ENCODE measurements at regions of chr10 and their contacts with region 1.

Region 1: DNA sequence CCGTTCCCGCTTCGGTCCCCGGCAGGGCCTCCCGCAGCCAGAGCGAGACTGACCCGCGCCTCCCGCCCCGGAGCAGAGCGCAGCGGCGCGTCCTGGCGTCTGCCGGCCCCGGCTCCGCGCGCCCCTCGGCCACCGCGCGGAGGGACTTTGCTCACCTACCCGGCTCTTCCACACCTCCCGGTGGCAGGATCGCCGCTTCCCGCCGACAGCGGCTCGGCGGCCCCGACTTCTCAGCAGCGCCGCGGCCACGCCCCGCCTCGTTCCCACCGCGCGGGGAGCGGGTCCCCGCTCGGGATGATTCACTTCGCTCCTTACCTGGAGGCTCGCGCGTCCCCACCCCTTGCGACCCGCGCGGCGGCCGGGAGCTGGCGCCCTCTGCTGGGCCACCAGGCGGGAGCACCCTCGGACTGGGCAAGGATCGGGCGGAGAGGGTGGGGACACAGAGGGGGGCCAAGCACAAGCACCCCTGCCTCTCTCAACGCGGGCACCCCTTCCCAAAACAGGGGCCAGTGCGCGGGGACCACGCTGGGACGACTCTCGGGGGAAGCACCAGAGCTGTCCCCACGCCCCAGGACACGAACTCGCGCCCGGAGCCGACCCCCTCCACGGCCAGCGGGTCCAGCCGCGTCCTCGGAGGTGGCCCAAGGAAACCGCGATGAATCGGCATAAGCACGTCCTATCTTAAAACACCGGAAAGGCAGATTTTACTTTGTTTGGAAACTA is 101.0 kb upstream of the SVIL start:
- DNase-seq: peak; percentile 86 to 95
- ATAC-seq: peak; percentile 83 to 90 (median 86)
- H3K4me3 ChIP-seq: peak overlapping the region; percentile 94
- H3K27ac ChIP-seq: peak overlapping the region; percentile 98
- H3K4me1 ChIP-seq: peaks cover 33% of the 10 kb centered on the region
- H3K27me3 ChIP-seq: no peaks in the 10 kb centered on the region
- CTCF ChIP-seq: peak; percentile 87

Region 2: GRCh38 chr10:29555746-29556481 is 179.8 kb before region 1 on chr10:
- intact Hi-C with region 1: no loop called
- DNase-seq: no peak
- ATAC-seq: no peak
- H3K4me3 ChIP-seq: no peak overlapping the region
- H3K27ac ChIP-seq: peak overlapping the region; percentile 81
- H3K4me1 ChIP-seq: peaks cover 67% of the 10 kb centered on the region
- H3K27me3 ChIP-seq: no peaks in the 10 kb centered on the region
- CTCF ChIP-seq: no peak

Region 3: GRCh38 chr10:29646238-29646902 is 89.4 kb before region 1 on chr10:
- intact Hi-C with region 1: loop called (anchors 5 kb)
- DNase-seq: peak in 1 of 2 donors; percentile 51
- ATAC-seq: peak; percentile 45 to 54 (median 49)
- H3K4me3 ChIP-seq: peak overlapping the region; percentile 25
- H3K27ac ChIP-seq: peak overlapping the region; percentile 94
- H3K4me1 ChIP-seq: peaks cover 67% of the 10 kb centered on the region
- H3K27me3 ChIP-seq: no peaks in the 10 kb centered on the region
- CTCF ChIP-seq: no peak

Region 4: DNA sequence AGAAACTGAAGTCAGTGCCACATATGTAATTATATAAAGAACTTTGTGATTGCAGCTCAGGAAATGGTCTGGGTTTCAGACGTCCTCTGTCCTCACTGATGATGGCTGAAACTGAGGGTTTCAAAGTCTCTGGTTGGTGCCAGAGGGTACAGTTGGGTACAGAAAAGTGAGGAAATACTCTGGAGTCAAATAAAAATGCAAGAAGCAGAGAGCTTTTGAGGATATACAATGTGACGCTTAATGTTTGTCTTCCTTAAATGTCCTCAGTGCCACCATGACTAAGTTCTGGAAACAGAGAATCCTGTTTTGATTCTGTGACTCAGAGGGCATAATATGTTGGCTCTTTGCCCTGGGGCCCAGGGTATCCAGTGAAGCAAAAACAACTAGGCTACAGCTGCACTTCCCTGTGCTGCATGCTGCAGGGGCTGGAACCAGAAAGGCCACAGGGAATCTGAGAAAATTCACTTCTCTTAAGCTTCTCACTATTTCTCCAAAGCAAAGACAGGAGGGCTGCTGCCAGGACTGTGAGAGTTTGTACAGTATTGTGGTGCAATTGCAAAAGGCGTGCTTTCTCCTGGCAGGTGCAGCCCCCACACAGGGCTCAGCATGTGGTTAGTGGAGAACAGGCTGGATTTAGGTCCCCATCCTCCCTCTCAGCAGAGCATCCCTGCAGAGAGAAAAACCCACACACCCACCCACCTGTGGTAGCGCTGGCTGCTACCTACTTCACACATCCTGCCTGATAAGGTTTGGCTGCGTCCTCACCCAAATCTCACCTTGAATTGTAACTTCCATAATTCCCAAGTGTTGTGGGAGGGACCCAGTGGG is 68.5 kb after region 1 on chr10:
- intact Hi-C with region 1: loop called in 1 of 2 experiments (anchors 5 kb)
- DNase-seq: peak; percentile 51 to 75
- ATAC-seq: peak; percentile 71 to 89 (median 81)
- H3K4me3 ChIP-seq: peak overlapping the region; percentile 11
- H3K27ac ChIP-seq: peak overlapping the region; percentile 98
- H3K4me1 ChIP-seq: peaks cover 52% of the 10 kb centered on the region
- H3K27me3 ChIP-seq: no peaks in the 10 kb centered on the region
- CTCF ChIP-seq: no peak

Region 5: GRCh38 chr10:29857843-29858701 is 122.3 kb after region 1 on chr10:
- intact Hi-C with region 1: loop called (anchors 1 to 5 kb)
- DNase-seq: peak; percentile 70 to 86
- ATAC-seq: peak; percentile 80 to 87 (median 83)
- H3K4me3 ChIP-seq: peak overlapping the region; percentile 22
- H3K27ac ChIP-seq: peak overlapping the region; percentile 84
- H3K4me1 ChIP-seq: peaks cover 50% of the 10 kb centered on the region
- H3K27me3 ChIP-seq: no peaks in the 10 kb centered on the region
- CTCF ChIP-seq: peak; percentile 68